Motor neuron (in vitro differentiated cells): ENCODE measurements at regions of chr2 and their contacts with region 1.

Region 1: GRCh38 chr2:26605195-26605998 is 35.8 kb downstream of the CIB4 start:
- ATAC-seq: peak in 6 of 8 experiments; percentile 14 to 84 (median 58)
- H3K4me3 ChIP-seq: no peak overlapping the region
- H3K27ac ChIP-seq: no peak overlapping the region
- H3K4me1 ChIP-seq: peaks cover 33 to 34% of the 10 kb centered on the region in 2 donors

Region 2: GRCh38 chr2:26735096-26735495 is 129.7 kb after region 1 on chr2:
- in situ Hi-C with region 1: loop called in 4 of 9 experiments (anchors 5 to 25 kb)
- ATAC-seq: peak in 3 of 8 experiments; percentile 34 to 97 (median 96)
- H3K4me3 ChIP-seq: no peak overlapping the region
- H3K27ac ChIP-seq: no peak overlapping the region
- H3K4me1 ChIP-seq: peaks cover 10 to 14% of the 10 kb centered on the region in 2 donors

Region 3: DNA sequence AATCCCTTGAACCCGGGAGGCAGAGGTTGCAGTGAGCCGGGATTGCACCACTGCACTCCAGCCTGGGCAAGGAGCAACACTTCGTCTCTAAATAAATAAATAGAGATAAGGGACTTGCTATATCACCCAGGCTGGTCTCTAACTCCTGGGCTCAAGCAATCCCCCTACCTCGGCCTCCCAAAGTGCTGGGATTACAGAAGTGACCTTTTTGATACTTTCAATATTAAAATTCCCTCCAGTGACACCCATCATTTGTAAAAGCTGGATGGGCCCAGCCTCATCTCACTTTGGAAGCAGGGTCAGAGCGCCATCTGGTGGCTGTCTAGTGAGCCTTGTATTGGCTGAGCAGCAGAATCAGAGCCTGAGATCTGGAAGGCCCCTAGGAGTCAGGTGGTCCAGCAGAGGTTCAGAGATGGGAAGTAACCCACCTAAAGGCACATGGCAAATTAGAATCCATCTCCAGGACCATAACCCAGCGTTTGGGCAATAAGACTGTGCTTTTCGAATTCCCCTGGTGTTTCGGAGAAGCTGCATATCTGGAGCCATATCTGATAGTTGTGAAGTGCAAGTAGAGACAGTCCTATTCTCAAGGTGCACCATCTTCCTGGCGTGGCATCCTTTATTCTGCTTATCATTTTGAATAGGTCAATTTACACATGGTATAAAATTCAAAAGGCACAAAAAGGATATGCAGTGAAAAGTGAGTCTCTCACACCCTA is 140.4 kb after region 1 on chr2:
- in situ Hi-C with region 1: loop called in 4 of 9 experiments (anchors 5 to 25 kb)
- ATAC-seq: peak; percentile 79 to 98 (median 95)
- H3K4me3 ChIP-seq: no peak overlapping the region
- H3K27ac ChIP-seq: no peak overlapping the region
- H3K4me1 ChIP-seq: peaks cover 12 to 14% of the 10 kb centered on the region in 2 donors

Region 4: DNA sequence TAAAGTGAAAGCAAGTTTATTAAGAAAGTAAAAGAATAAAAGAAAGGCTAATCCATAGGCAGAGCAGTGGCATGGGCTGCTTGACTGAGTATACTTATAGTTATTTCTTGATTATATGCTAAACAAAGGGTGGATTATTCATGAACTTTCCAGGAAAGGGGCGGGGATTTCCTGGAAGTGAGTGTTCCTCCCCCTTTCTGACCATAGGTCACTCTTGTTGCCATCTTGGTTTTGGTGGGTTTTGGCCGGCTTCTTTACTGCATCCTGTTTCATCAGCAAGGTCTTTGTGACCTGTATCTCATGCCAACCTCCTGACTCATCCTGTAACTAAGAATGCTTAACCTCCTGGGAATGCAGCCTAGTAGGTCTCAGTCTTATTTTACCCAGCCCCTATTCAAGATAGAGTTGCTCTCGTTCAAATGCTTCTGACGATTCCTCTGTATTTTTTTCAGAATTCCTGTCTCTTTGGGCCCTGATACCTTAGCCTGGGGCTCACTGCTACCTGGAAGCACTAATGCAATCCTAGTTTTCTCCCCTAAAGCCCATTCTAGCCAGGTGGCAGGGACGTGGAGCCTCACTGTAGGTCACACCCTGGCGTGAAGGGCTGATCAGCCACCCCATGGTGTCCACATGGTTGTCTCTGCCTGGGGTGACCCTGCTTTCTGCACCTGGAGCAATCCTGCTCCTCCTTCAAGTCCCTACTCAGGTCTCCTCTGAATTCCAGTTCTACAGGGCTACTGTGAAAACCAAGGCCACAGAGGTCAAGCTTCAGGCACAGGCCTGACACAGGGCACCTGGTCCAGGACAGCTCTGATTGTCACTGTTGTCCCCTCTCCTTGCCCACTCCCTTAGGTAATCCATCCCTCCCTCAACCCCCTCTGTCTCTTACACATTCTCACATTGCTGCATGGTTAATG is 152.7 kb after region 1 on chr2:
- in situ Hi-C with region 1: loop called in 1 of 9 experiments (anchors 10 kb)
- ATAC-seq: peak; percentile 73 to 91 (median 84)
- H3K4me3 ChIP-seq: no peak overlapping the region
- H3K27ac ChIP-seq: peak overlapping the region; percentile 75 to 94
- H3K4me1 ChIP-seq: peaks cover 22 to 34% of the 10 kb centered on the region in 2 donors